SK-N-SH (cell line): ENCODE measurements at regions of chr5 and their contacts with region 1.

Region 1: DNA sequence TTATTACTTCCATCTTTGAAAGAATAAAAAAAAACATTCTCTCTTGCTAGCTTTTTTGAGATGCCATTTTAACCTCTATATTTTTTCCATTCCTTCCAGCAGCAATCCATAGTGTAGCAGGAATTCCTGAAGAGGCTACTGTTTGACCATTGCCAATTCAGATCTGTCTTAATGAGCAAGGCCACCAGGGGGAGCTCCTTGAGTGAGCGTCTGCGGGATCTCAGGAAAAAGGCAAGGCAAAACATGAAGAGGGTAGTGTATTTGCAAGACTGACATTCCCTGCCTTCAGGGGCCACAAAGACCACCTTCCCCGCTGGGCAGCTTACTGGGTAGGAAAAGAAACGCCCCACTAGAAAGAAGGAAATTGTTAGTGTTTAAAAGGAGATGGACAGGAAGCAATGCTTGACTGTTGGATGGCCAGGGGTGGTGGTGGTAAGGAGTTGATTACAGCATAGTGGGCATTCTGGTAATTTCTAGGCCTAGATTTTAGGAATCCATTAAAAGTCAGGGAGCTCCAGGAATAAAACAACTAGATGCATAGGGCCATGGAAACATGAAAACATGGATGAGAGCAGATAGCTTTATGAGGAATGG is 206.6 kb upstream of the HAPLN1 start:
- DNase-seq: peak; percentile 12
- H3K4me3 ChIP-seq: no peak overlapping the region
- H3K27ac ChIP-seq: peak overlapping the region; percentile 89 to 94; a peak in 1 of 4 replicates
- H3K4me1 ChIP-seq: peaks cover 15 to 20% of the 10 kb centered on the region in 2 experiments; a peak in 3 of 4 replicates
- H3K27me3 ChIP-seq: no peaks in the 10 kb centered on the region
- CTCF ChIP-seq: peak; percentile 85
- EP300 ChIP-seq: no peak
- RAD21 ChIP-seq: peak; percentile 75

Region 2: GRCh38 chr5:83937837-83938236 is 10.6 kb after region 1 on chr5:
- CTCF ChIA-PET with region 1: interaction called, 34 read pairs
- POLR2A ChIA-PET with region 1: no interaction called
- DNase-seq: no peak
- H3K4me3 ChIP-seq: no peak overlapping the region
- H3K27ac ChIP-seq: no peak overlapping the region
- H3K4me1 ChIP-seq: no peaks in the 10 kb centered on the region
- H3K27me3 ChIP-seq: no peaks in the 10 kb centered on the region
- CTCF ChIP-seq: no peak
- EP300 ChIP-seq: no peak
- RAD21 ChIP-seq: no peak

Region 3: GRCh38 chr5:84255315-84255714 is 328.1 kb after region 1 on chr5:
- CTCF ChIA-PET with region 1: interaction called, 13 read pairs
- POLR2A ChIA-PET with region 1: no interaction called
- DNase-seq: peak; percentile 27
- H3K4me3 ChIP-seq: no peak overlapping the region
- H3K27ac ChIP-seq: no peak overlapping the region
- H3K4me1 ChIP-seq: peaks cover 3% of the 10 kb centered on the region in 2 experiments; a peak in 2 of 4 replicates
- H3K27me3 ChIP-seq: no peaks in the 10 kb centered on the region
- CTCF ChIP-seq: peak; percentile 52
- EP300 ChIP-seq: no peak
- RAD21 ChIP-seq: peak; percentile 64